Mammary epithelial cell (primary cell): ENCODE measurements at regions of chr16 and their contacts with region 1.

Region 1: DNA sequence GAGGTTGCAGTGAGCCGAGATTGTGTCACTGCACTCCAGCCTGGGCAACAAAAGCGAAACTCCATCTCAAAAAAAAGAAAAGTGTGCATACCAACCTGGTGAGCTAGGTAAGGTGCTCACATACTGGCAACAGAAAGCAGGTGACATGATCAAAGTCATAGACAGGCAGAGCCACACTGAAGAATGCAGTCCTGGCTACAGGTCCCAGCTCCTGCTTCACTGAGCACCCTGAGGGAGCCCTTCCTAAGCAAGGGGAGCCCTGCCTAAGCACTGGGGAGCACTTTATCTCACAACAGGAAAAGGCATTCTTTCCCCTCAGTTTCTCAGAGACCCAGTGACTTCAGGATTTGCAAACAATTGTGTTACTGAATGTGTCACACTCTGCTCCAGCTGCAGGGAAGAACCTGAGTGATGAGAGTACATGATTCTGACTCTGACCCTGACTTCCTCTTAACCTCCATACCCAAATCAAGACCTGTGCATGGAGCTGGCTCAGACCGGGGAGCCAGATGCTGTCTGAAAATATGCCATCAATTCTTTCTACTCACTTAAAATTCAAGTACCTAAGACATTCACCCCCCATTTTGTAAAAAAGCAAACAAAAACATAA is 40.5 kb downstream of the ANKRD11 start:
- DNase-seq: peak; percentile 42
- H3K4me3 ChIP-seq: no peak overlapping the region
- H3K27ac ChIP-seq: peak overlapping the region; percentile 19
- H3K4me1 ChIP-seq: peaks cover 42% of the 10 kb centered on the region
- H3K27me3 ChIP-seq: no peaks in the 10 kb centered on the region
- CTCF ChIP-seq: no peak

Region 2: GRCh38 chr16:89484923-89485679 is 35.3 kb after region 1 on chr16:
- CTCF ChIA-PET with region 1: no interaction called
- dilution Hi-C with region 1: loop called (anchors 5 kb)
- in situ Hi-C with region 1: loop called in 1 of 2 experiments (anchors 5 kb)
- intact Hi-C with region 1: no loop called
- DNase-seq: no peak
- H3K4me3 ChIP-seq: no peak overlapping the region
- H3K27ac ChIP-seq: no peak overlapping the region
- H3K4me1 ChIP-seq: peaks cover 38% of the 10 kb centered on the region
- H3K27me3 ChIP-seq: no peaks in the 10 kb centered on the region
- CTCF ChIP-seq: no peak